ENCODE measurements at regions of chr5 and their contacts with region 1.

Region 1: GRCh38 chr5:138449501-138450239 is 10.8 kb downstream of the REEP2 start:
- DNase-seq: peak; percentile 81 to 96
- ATAC-seq: peak; percentile 86 to 96
- H3K4me3 ChIP-seq: no peak overlapping the region
- H3K27ac ChIP-seq: peak overlapping the region; percentile 19 to 69; a peak in 4 of 6 replicates
- H3K4me1 ChIP-seq: peaks cover 9% of the 10 kb centered on the region; the same call in 1 of the 3 replicates
- CTCF ChIP-seq: peak; percentile 86
- EP300 ChIP-seq: no peak
- POLR2A ChIP-seq: no peak
- RAD21 ChIP-seq: peak; percentile 81 to 85

Region 2: DNA sequence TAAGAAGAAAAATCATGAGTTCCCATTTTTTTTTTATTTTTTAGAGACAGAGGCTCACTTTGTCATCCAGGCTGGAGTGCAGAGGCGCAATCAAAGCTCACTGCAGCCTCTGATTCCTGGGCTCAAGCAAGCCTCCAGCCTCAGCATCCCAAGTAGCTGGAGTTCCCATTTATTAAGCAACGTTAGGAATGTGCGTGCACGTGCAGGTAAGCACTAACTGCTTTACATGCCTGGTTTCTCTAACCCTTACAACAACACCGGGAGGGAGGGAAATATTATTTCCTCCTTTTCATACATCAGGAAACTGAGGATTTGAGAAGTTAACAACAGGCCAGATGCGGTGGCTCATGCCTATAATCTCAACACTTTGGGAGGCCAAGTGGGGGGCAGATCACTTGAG is 220.3 kb before region 1 on chr5:
- CTCF ChIA-PET with region 1: no interaction called
- POLR2A ChIA-PET with region 1: no interaction called
- DNase-seq: no peak
- ATAC-seq: no peak
- H3K4me3 ChIP-seq: no peak overlapping the region
- H3K27ac ChIP-seq: peak overlapping the region in 1 of 2 experiments; percentile 59; a peak in 2 of 6 replicates
- H3K4me1 ChIP-seq: peaks cover 16% of the 10 kb centered on the region
- CTCF ChIP-seq: no peak
- EP300 ChIP-seq: no peak
- POLR2A ChIP-seq: no peak
- RAD21 ChIP-seq: no peak

Region 3: GRCh38 chr5:138438724-138439476 is 10.8 kb before region 1 on chr5 and contains the start of gene REEP2:
- CTCF ChIA-PET with region 1: interaction called, 43 read pairs
- POLR2A ChIA-PET with region 1: no interaction called
- DNase-seq: peak; percentile 22 to 62
- ATAC-seq: peak; percentile 72 to 73
- H3K4me3 ChIP-seq: peak within 1 kb of the TSS; percentile 57
- H3K27ac ChIP-seq: peak within 1 kb of the TSS; percentile 60 to 86
- H3K4me1 ChIP-seq: peaks cover 8% of the 10 kb centered on the region; the same call in 2 of the 3 replicates
- CTCF ChIP-seq: no peak
- EP300 ChIP-seq: no peak
- POLR2A ChIP-seq: no peak; the same call in 1 of the 2 replicates
- RAD21 ChIP-seq: no peak
- polyA plus RNA-seq, gene REEP2: 4.6 and 9.3 TPM in 2 replicates

Region 4: GRCh38 chr5:138482638-138483037 is 33.0 kb after region 1 on chr5:
- CTCF ChIA-PET with region 1: interaction called, 11 read pairs
- POLR2A ChIA-PET with region 1: no interaction called
- DNase-seq: no peak
- ATAC-seq: peak; percentile 54 to 68
- H3K4me3 ChIP-seq: no peak overlapping the region
- H3K27ac ChIP-seq: no peak overlapping the region
- H3K4me1 ChIP-seq: no peaks in the 10 kb centered on the region
- CTCF ChIP-seq: no peak
- EP300 ChIP-seq: no peak
- POLR2A ChIP-seq: no peak
- RAD21 ChIP-seq: no peak

Region 5: GRCh38 chr5:138503487-138504270 is 54.0 kb after region 1 on chr5:
- CTCF ChIA-PET with region 1: interaction called, 203 read pairs
- POLR2A ChIA-PET with region 1: interaction called, 5 read pairs
- DNase-seq: peak; percentile 67 to 86
- ATAC-seq: peak; percentile 71 to 82
- H3K4me3 ChIP-seq: no peak overlapping the region
- H3K27ac ChIP-seq: no peak overlapping the region
- H3K4me1 ChIP-seq: peaks cover 29% of the 10 kb centered on the region; the same call in 2 of the 3 replicates
- CTCF ChIP-seq: peak; percentile 84
- EP300 ChIP-seq: no peak
- POLR2A ChIP-seq: no peak
- RAD21 ChIP-seq: peak; percentile 73 to 76

Region 6: DNA sequence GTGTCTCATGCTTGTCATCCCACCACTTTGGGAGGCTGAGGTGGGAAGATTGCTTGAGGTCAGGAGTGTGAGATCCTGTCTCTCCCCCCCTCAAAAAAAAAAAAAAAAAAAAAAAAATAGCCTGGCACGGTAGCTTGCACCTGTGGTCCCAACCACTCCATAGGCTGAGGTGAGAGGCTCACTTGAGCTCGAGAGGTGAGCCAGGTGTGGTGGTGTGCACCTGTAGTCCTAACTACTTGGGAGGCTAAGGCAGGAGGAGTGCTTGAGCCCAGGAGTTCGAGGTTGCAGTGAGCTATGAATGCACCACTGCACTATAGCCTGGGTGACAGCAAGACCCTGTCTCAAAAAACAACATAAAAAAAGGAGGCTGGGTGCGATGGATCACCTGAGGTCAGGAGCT is 103.0 kb after region 1 on chr5:
- CTCF ChIA-PET with region 1: interaction called, 25 read pairs
- POLR2A ChIA-PET with region 1: no interaction called
- DNase-seq: no peak
- ATAC-seq: no peak
- H3K4me3 ChIP-seq: no peak overlapping the region
- H3K27ac ChIP-seq: no peak overlapping the region
- H3K4me1 ChIP-seq: no peaks in the 10 kb centered on the region
- CTCF ChIP-seq: no peak
- EP300 ChIP-seq: no peak
- POLR2A ChIP-seq: no peak
- RAD21 ChIP-seq: no peak

Measured in A549 (cell line).